ENCODE measurements at regions of chr13 and their contacts with region 1.

Region 1: GRCh38 chr13:67416047-67416925 is 186.2 kb upstream of the PCDH9 start:
- DNase-seq: peak; percentile 48 to 59
- H3K4me3 ChIP-seq: no peak overlapping the region
- H3K4me3 Mint-ChIP-seq: no peak overlapping the region
- H3K27ac Mint-ChIP-seq: no peak overlapping the region
- H3K4me1 ChIP-seq: no peaks in the 10 kb centered on the region
- H3K4me1 Mint-ChIP-seq: no peaks in the 10 kb centered on the region
- H3K27me3 ChIP-seq: no peaks in the 10 kb centered on the region
- H3K27me3 Mint-ChIP-seq: peaks cover 2% of the 10 kb centered on the region
- CTCF ChIP-seq: peak; percentile 60 to 75

Region 2: DNA sequence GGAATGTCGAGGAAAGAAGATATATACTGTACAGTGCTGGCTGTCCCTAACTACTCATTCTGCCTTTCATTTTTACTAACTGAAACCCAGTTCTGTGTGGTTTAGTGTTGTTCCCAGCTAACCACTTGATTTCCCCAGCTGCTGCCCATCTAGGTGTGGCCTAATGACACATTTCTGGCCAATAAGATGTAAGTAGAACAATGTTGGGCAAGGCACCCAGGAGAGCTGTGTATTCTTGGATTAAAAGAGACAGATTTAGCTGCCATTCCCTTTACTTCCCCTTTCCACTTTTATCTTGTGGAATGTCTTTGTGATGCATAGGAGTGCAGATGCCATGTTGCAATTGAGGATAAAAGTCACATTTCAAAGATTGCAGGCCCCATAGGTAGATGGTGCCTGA is 157.8 kb before region 1 on chr13:
- CTCF ChIA-PET with region 1: no interaction called
- POLR2A ChIA-PET with region 1: no interaction called
- intact Hi-C with region 1: loop called (anchors 10 kb)
- DNase-seq: peak; percentile 25 to 35
- H3K4me3 ChIP-seq: no peak overlapping the region
- H3K4me3 Mint-ChIP-seq: no peak overlapping the region
- H3K27ac Mint-ChIP-seq: no peak overlapping the region
- H3K4me1 ChIP-seq: no peaks in the 10 kb centered on the region
- H3K4me1 Mint-ChIP-seq: no peaks in the 10 kb centered on the region
- H3K27me3 ChIP-seq: no peaks in the 10 kb centered on the region
- H3K27me3 Mint-ChIP-seq: no peaks in the 10 kb centered on the region
- CTCF ChIP-seq: no peak

Measured in Caco-2 (cell line).